Esophagus muscularis mucosa (tissue), 4 donors: ENCODE measurements at regions of chr11 and their contacts with region 1.

Region 1: GRCh38 chr11:26649884-26650283 is 72.0 kb downstream of the SLC5A12 start:
- DNase-seq: no peak
- H3K4me3 ChIP-seq: no peak overlapping the region
- H3K27ac ChIP-seq: no peak overlapping the region
- H3K4me1 ChIP-seq: peaks cover 0 to 3% (median 0%) of the 10 kb centered on the region in 4 donors
- H3K27me3 ChIP-seq: no peaks in the 10 kb centered on the region
- CTCF ChIP-seq: peak; percentile 61 to 73 (median 71)
- EP300 ChIP-seq: no peak
- POLR2A ChIP-seq: no peak

Region 2: DNA sequence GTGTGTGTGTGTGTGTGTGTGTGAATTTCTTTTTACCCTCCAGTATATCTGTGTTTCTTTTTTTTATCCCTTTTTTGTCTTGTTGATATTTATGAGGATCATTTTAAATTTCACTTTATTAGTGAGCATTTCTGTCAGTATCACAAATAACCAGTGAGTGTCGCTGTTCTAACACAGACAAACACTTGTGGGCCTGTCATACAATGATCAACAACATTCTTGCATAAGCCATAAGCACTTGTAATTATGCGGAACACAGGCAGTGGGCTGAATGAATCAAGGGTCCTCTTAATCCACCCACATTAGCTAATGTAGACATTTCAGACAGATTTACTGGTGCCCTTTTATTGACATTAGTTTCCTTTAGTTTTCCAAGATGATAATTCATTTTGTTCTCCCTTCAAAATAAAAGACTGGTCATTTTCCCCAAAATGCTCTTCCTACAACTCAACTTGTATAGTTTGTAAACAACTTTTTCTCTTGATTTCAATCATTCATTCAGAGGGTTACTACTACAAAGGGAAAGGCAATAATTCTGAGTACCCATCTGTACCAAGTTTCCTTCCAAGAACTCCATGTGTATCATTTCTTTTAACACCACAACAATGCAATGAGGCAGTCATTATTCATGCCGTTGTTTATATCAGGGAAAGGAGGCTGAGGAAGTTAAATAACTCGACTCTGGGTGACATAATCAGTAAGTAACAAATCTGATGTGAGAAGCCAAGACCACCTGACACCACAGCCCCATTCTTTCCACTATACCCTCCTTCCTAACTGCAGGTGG is 352.5 kb before region 1 on chr11:
- intact Hi-C with region 1: loop called (anchors 5 kb)
- DNase-seq: no peak
- H3K4me3 ChIP-seq: no peak overlapping the region
- H3K27ac ChIP-seq: no peak overlapping the region
- H3K4me1 ChIP-seq: peaks cover 0 to 11% (median 7%) of the 10 kb centered on the region in 4 donors
- H3K27me3 ChIP-seq: no peaks in the 10 kb centered on the region
- CTCF ChIP-seq: peak; percentile 36 to 68 (median 49)
- EP300 ChIP-seq: no peak
- POLR2A ChIP-seq: no peak

Region 3: DNA sequence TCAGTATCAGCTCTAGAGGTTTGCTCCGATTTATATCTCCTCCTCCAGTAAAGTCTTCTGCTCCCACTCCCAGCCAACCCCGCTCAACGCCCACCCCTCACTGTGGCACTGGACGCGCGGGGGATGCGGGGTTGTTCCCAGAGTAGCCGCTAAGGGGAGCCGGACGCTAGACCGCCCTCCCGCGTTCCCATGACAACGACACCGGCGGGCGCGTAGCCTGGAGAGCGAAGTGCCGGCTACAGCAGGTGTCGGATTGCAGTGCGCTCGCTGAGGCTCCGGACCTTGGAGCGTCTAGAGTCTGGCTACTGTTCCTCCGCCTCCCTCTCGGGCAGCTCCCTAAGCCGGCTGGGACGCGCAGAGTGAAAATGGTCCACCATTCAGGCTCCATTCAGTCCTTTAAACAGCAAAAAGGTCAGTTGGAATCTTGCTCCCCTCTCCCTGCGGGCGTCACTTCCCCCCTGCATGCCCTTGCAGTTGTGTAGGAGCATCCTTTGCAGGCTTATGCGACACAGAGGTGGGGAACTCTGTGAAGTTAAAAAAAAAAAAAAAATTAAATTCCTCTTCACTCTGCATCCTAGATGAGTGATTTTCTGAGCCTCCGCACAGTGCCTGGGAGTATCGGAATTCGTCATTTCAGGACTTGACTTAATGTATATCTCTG is 317.8 kb before region 1 on chr11 and contains the start of gene ANO3:
- intact Hi-C with region 1: loop called (anchors 10 kb)
- DNase-seq: no peak
- H3K4me3 ChIP-seq: peak within 1 kb of the TSS; percentile 46 to 58 (median 48)
- H3K27ac ChIP-seq: no peak within 1 kb of the TSS
- H3K4me1 ChIP-seq: peaks cover 0 to 15% (median 12%) of the 10 kb centered on the region in 4 donors
- H3K27me3 ChIP-seq: no peaks in the 10 kb centered on the region
- CTCF ChIP-seq: peak; percentile 57 to 69 (median 61)
- EP300 ChIP-seq: no peak
- POLR2A ChIP-seq: no peak
- total RNA-seq, gene ANO3: 0.17 TPM in 1 of 4 donors, not detected in the others